ENCODE measurements at regions of chr5 and their contacts with region 1.

Region 1: DNA sequence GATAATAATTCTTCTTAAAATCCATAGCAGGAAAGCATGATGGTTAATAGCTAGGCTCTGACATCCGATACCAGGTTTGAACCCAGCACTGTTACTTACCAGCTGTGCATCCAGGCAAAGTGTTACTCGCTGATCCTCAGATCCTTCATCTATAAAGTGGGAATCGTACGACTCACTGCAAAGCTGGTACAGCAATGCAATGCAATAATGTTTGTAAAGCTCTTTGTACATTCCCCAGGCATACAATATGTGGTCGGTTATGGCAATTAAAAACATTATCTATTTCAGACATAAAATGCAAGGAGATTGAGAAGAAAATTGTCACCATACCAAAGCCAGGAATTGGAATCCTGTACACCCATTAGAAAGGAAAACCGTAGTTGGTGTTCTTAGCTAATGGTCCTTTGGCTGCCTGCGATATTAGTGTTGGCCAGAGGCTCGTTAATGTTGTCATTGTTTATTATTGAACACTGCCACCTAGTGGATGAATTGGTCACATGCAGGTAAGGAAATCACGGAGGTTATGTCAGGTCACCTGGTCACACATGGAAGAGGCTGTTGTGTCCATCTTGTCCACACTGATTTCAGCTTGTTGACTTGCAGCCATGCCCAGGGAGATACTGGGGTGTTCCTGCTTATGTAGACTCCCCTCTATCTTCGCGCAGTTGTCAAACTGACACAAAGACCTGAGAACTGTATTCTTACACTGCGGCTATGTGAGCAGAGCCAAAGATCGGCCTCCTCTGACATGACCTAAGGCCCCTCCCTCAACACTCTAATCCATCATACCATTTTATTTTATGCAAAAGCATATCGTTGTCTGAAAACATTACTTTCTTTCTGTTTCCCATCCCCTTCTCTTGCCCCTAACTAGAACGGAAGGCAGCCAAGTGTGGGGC is 87.5 kb upstream of the PPP2R2B start:
- DNase-seq: peak; percentile 79 to 85
- H3K4me3 ChIP-seq: no peak overlapping the region
- H3K4me1 ChIP-seq: peaks cover 8% of the 10 kb centered on the region
- H3K27me3 ChIP-seq: peaks cover 2% of the 10 kb centered on the region

Region 2: GRCh38 chr5:146539973-146540372 is 426.0 kb before region 1 on chr5:
- in situ Hi-C with region 1: loop called (anchors 5 kb)
- DNase-seq: no peak
- H3K4me3 ChIP-seq: no peak overlapping the region
- H3K4me1 ChIP-seq: no peaks in the 10 kb centered on the region
- H3K27me3 ChIP-seq: no peaks in the 10 kb centered on the region

Measured in HAP-1 (cell line).